Common myeloid progenitor, CD34-positive (primary cell): ENCODE measurements at regions of chr1 and their contacts with region 1.

Region 1: GRCh38 chr1:229625071-229625914 is 629 bp downstream of the TAF5L start:
- DNase-seq: peak; percentile 27 to 66 (median 50)
- H3K4me3 ChIP-seq: peak overlapping the region; percentile 54 to 98 (median 87)
- H3K27ac ChIP-seq: peak overlapping the region in 1 of 2 experiments; percentile 81
- H3K4me1 ChIP-seq: peaks cover 11 to 38% (median 20%) of the 10 kb centered on the region in 4 experiments
- H3K27me3 ChIP-seq: no peaks in the 10 kb centered on the region

Region 2: GRCh38 chr1:229558571-229559335 is 66.5 kb before region 1 on chr1 and contains the start of gene ABCB10:
- CTCF ChIA-PET with region 1: interaction called, 12 read pairs
- POLR2A ChIA-PET with region 1: interaction called, 4 read pairs
- DNase-seq: peak; percentile 95 to 97 (median 95)
- H3K4me3 ChIP-seq: peak within 1 kb of the TSS; percentile 75 to 90 (median 85)
- H3K27ac ChIP-seq: peak within 1 kb of the TSS; percentile 46 to 79
- H3K4me1 ChIP-seq: peaks cover 10 to 42% (median 35%) of the 10 kb centered on the region in 4 experiments
- H3K27me3 ChIP-seq: no peaks in the 10 kb centered on the region